HEK293T (cell line): ENCODE measurements at regions of chr1 and their contacts with region 1.

Region 1: DNA sequence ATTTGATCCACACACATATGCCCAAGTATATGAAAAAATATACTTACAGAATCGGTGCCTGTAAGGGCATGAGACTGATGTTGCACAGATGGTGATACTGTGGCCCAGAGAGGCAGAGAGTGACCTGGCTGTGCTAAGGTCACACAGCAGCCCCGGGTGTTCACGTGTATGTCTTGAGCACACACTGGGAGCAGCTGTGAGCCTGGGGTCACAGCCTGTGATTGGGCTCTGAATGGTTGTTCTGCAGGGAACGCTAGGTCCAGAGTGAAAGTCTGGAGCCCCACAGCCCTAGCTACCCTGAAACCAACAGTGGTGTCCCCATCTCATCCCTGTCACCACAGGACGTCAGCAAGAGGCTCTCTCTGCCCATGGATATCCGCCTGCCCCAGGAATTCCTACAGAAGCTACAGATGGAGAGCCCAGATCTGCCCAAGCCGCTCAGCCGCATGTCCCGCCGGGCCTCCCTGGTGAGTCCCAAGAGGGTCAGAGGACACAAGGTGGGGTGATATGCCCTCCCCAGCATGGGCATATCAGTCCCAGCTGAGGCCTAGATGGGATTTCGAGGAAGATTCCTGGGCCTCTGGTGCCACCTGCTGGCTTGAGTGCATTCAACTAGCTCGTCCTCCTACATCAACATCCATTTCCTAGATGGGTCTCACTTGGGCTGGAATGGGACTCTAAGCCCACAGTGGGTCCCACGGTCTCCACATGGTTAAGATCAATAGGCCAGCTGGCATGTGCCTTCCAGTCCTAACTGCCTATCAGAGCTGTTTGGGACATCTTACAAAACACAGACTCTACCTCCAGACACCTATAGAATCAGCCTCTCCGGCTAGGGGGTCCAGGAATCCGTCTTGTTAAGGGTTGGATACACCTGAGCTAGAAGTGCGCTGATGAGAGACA is 19.7 kb downstream of the CDK18 start:
- DNase-seq: peak; percentile 85

Region 2: GRCh38 chr1:205270764-205271163 is 253.4 kb before region 1 on chr1:
- CTCF ChIA-PET with region 1: no interaction called
- POLR2A ChIA-PET with region 1: no interaction called
- DNase-seq: no peak

Region 3: DNA sequence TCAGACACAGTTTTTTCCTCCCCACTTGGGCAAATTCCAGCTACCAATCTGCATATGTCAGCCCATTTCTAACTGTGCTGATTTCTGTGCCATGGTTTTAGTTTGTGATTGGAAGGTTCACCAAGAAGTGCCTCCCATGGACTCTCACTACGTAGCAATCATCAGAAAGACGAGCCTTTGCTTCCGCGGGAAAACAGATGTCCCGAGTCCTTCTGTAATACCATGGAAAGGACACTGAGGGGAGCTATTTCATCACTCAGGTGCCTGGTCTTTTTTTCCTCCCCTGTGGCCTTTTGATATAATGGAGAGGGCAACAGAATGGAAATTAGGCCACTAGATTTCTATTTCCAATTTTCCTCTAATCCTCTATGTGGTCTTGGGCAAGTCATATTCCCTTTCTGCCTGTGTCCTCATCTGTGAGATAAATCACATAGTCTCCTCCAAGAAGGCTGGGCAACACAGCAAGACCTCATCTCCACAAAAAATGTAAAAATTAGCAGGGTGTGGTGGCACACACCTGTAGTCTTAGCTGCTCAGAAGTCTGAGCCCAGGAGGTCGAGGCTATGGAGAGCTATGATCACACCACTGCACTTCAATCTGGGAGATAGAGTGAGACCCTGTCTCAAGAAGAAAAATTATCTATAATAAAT is 127.0 kb before region 1 on chr1:
- CTCF ChIA-PET with region 1: interaction called, 13 read pairs
- POLR2A ChIA-PET with region 1: no interaction called
- DNase-seq: peak; percentile 82

Region 4: DNA sequence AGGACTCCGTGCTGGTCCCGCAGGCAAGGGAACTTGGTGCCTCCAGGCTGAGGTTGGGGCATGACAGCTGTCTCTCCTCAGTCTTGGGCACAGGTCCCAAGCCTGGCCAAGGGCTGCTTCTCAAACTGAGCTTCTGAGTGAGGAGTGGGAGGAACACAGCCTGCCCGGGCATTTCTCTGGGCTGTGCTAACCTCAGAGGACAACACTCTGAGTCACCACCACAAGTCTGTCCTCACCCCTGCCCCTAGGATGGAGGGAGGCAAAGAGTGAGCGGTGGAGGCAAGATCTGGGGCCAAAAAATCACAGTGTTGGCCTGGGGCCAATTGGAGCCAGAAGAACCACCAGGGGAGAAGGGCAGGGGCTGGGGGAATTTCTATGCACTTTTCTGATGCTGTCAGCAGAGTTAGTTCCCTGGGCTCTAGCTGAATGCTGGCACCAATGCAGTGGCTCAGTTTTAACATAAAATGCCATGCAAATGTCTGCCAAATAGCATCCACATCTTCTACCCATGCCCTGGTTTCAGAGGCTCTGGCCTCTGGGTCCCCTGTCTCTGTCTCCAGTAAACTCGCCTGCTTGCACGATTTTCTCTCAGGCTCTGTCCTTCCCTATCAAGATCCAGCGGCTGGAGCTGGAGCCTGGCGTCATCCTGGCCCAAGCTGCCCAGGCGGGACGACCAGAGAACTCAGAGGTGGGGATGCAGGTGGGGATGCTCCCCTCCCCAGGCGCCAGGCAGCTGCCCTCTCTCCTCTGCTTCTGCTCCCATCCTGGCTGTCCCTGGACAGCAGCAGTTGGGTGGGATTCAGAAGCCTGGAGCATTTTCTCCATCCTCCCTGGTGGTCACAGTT is 30.7 kb before region 1 on chr1:
- CTCF ChIA-PET with region 1: interaction called, 114 read pairs
- POLR2A ChIA-PET with region 1: no interaction called
- DNase-seq: no peak

Region 5: GRCh38 chr1:205500240-205501233 is 23.6 kb before region 1 on chr1:
- CTCF ChIA-PET with region 1: interaction called, 35 read pairs
- POLR2A ChIA-PET with region 1: no interaction called
- DNase-seq: no peak

Region 6: GRCh38 chr1:205512059-205513045 is 11.8 kb before region 1 on chr1:
- CTCF ChIA-PET with region 1: interaction called, 21 read pairs
- POLR2A ChIA-PET with region 1: no interaction called
- DNase-seq: no peak

Region 7: DNA sequence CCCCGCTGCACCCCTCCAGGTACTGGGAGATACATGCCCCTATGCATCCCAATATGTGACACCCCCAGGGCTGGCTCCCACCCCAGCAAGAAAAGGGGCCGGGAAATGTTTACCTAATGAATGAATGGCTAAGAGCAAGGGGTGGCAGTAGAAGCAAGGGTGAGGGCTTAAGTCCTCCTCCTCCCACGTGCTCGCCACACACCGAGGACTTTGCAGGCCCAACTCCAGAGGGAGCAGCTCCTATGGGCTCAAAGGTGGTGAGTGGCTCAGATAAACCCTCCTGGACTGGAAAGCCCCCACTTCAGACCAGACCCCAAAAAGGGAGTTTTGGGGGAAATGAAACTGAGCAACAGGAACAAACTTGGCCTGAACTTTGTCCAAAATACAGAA is 144.8 kb after region 1 on chr1:
- CTCF ChIA-PET with region 1: no interaction called
- POLR2A ChIA-PET with region 1: no interaction called
- DNase-seq: no peak